ENCODE measurements at regions of chr1 and their contacts with region 1.

Region 1: DNA sequence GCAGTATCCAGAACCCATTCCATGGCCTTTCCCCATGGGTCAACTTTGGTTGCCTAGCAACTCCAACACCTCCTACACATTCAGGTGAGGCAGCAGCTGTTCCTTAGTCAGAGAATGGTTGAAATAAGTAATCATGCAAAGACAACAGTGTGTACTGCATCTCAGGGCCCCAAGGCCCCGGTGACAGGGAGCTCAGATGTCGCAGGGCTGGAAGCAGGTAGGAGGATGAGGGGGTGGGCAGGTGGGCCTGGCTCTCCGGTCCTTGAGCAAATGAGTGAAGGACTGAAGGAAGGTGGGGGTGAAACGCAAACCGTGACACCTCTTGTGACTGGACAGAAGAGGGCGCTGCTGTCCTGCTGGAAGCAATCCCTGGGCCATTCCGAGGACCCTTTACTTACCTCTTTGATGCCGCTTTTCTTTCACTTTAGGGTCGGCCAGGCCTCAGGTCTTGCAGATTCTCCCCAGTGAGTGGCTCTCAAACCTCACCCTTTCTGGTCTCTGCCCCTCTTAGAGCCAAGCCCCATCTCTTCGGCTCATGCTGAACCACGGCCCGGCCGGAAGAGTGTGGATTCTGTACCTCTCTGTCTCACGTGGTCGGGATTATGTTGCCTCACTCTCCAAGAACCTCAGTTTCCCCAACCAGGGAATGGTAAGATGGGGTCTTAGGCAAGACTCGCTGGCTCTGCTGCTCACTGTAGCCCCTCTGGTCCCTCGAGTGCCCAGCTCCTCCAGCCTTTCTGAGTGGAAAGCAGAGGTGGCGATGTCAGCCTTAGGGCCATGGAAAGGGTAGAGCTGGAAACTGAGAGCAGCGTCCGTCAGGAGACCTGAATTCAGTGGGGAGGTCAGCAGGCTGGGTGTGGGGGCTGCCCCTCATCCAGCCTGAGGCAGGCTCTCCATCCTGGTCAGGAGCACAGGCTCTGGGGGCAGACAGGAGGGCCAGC is 5.6 kb upstream of the KCNA10 start:
- DNase-seq: no peak
- ATAC-seq: peak; percentile 75

Region 2: DNA sequence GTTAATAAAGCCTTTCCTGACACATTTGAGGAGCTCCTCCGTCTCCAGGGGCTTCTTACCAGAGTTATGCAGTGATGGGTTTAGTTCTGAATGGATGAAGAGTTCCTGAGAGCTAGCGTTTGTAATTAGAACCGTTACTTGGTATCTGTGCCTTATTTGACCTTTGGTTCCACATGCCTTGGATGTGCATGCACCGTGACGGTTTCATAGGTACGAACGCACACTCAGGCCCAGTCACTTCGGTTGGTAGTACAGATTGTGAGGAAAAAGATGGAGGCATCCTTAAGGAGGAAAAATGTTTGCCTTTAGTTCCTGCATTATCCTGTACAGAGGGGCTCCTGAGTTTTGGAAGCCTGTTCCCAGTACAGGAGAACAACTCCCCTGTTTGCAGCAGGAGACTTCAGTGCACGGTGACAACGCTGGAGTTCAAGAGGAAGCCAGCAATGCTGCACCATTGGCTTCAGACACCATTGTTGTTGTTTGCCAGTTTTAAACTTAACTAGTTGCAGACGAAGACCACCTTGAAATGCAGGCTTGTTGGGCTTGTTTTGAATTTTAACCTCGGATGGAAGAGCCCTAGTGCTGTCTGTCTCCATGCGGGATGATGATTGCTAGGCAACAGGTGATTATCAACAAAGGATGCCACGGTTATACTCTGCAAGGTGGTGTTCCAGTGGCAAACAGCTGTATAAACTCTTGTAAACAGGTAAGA is 177.2 kb before region 1 on chr1:
- intact Hi-C with region 1: no loop called
- DNase-seq: no peak
- ATAC-seq: peak; percentile 61

Region 3: DNA sequence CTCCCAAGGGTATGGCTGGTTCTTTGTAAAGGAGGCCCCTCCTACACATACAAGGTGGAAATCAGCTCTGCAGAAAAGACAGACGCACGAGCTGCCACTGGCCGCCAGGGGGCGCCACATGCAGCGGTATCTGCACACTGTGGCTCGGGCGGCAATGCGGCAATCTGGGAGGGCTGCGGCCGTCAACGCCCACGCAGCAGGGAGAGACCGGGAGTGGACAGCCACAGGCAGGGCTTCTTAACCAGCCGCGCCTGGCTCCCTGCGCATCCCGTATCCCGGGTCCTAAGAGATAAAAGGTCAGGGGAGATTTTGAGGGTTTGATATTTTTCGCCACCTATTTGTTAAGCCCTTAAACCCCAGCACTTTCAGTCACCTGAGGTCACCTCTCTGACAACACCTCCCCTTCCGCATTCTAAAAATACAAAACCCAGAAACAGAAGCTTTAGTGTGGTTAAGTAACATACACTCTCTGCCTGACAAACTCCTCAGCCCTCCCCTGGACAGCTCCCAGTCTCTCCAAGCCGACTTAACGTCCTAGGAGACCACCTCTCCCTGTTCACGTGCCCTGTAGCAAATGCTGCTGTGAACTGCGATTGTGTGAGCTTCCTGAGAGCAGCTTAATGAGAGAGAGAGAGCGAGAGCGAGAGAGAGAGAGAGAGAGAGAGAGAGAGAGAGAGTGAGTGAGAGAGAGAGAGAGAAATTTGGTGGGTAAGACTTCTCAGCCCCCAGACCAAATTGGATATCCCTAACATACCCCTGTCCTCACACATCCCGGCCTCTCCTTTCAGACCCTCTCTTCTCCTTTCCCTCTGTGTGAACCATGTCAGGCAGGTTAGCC is 95.0 kb after region 1 on chr1:
- intact Hi-C with region 1: loop called (anchors 5 kb)
- DNase-seq: peak; percentile 91
- ATAC-seq: peak; percentile 95

Region 4: GRCh38 chr1:110780600-110781484 is 256.3 kb after region 1 on chr1:
- intact Hi-C with region 1: loop called (anchors 10 kb)
- DNase-seq: peak; percentile 60
- ATAC-seq: peak; percentile 72